ENCODE measurements at regions of chr12 and their contacts with region 1.

Region 1: GRCh38 chr12:67937836-67938235 is 51.4 kb upstream of the IFNG-AS1 start:
- DNase-seq: no peak
- ATAC-seq: peak in 1 of 8 donors; percentile 22
- H3K4me3 ChIP-seq: no peak overlapping the region
- H3K27ac ChIP-seq: no peak overlapping the region
- H3K4me1 ChIP-seq: peaks cover 0 to 19% (median 4%) of the 10 kb centered on the region in 9 donors
- H3K27me3 ChIP-seq: no peaks in the 10 kb centered on the region
- CTCF ChIP-seq: no peak

Region 2: GRCh38 chr12:67441736-67442346 is 496.0 kb before region 1 on chr12:
- intact Hi-C with region 1: loop called in 5 of 10 experiments (anchors 1 to 5 kb)
- DNase-seq: peak; percentile 86 to 90
- ATAC-seq: peak; percentile 96 to 98 (median 97)
- H3K4me3 ChIP-seq: peak overlapping the region in 6 of 10 donors; percentile 6 to 25 (median 22)
- H3K27ac ChIP-seq: peak overlapping the region in 8 of 10 donors; percentile 6 to 66 (median 40)
- H3K4me1 ChIP-seq: peaks cover 5 to 19% (median 17%) of the 10 kb centered on the region in 9 donors
- H3K27me3 ChIP-seq: no peaks in the 10 kb centered on the region
- CTCF ChIP-seq: peak; percentile 51 to 96 (median 84)

Region 3: DNA sequence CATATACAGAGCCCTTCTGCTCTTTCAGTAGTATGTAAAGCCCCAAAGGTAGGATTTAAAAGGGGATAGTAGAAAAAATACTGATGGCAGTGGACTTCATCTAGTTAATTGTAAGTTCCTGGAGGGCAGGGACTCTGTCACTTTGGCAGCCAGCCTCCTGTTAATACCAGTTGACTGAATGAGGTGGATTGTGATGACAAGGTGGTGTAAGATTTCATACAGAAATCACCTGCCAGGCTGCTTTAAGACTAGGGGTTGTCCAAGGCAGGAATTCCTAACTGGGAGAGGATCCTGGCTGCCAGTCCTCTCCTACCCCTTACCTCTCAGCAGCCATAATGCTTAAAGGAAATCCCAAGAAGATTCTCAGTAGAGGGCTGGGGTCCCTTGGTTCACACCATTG is 282.0 kb before region 1 on chr12:
- intact Hi-C with region 1: loop called in 5 of 10 experiments (anchors 2 to 5 kb)
- DNase-seq: no peak
- ATAC-seq: peak in 4 of 8 donors; percentile 6 to 56 (median 31)
- H3K4me3 ChIP-seq: no peak overlapping the region
- H3K27ac ChIP-seq: peak overlapping the region in 5 of 10 donors; percentile 14 to 56 (median 41)
- H3K4me1 ChIP-seq: peaks cover 16 to 100% (median 88%) of the 10 kb centered on the region in 9 donors
- H3K27me3 ChIP-seq: no peaks in the 10 kb centered on the region
- CTCF ChIP-seq: no peak

Region 4: DNA sequence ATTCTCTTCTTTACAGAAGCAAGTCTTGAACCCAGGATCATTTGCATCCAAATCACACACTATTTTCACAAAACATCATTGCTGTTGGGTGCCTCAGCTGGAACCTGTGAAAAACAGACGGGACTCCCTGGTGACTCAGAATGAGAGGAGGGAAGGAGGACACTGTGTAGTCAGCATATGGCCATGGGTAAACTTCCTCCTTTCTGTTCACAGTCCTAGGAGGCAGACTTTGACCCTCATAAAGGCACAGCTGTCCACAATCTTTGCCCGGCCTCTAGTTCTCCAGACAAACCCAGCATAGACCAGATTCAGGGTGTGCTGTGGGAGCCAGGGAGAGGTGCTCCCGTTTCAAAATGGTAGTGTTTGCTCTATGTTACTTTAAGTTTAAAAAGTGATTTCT is 227.3 kb before region 1 on chr12:
- intact Hi-C with region 1: loop called in 1 of 10 experiments (anchors 10 kb)
- DNase-seq: peak in 1 of 2 donors; percentile 16
- ATAC-seq: peak in 5 of 8 donors; percentile 19 to 79 (median 48)
- H3K4me3 ChIP-seq: no peak overlapping the region
- H3K27ac ChIP-seq: peak overlapping the region in 6 of 10 donors; percentile 31 to 79 (median 68)
- H3K4me1 ChIP-seq: peaks cover 1 to 23% (median 10%) of the 10 kb centered on the region in 9 donors
- H3K27me3 ChIP-seq: no peaks in the 10 kb centered on the region
- CTCF ChIP-seq: no peak

Region 5: DNA sequence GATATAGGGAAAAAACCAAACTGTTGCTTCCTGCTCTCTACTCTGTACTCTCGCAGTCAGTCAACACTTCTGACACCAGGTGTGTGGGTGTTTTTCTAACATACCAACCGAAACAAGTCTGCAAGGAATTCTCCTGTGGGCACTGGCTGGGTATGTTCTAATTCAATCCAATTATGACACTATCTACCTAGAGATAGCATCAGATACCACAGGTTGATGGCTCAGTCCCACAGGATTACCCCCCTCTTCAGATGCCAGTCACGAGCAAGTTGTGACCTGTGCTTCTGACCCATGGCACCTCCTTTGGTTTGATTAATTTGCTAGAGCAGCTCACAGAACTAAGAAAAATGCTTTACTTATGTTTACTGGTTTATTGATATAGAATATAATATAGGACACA is 211.0 kb before region 1 on chr12:
- intact Hi-C with region 1: no loop called
- DNase-seq: no peak
- ATAC-seq: no peak
- H3K4me3 ChIP-seq: no peak overlapping the region
- H3K27ac ChIP-seq: no peak overlapping the region
- H3K4me1 ChIP-seq: peaks cover 0 to 18% (median 5%) of the 10 kb centered on the region in 9 donors
- H3K27me3 ChIP-seq: no peaks in the 10 kb centered on the region
- CTCF ChIP-seq: no peak

Measured in heart right ventricle (tissue), 16 donors.